ENCODE measurements at regions of chr12 and their contacts with region 1.

Region 1: DNA sequence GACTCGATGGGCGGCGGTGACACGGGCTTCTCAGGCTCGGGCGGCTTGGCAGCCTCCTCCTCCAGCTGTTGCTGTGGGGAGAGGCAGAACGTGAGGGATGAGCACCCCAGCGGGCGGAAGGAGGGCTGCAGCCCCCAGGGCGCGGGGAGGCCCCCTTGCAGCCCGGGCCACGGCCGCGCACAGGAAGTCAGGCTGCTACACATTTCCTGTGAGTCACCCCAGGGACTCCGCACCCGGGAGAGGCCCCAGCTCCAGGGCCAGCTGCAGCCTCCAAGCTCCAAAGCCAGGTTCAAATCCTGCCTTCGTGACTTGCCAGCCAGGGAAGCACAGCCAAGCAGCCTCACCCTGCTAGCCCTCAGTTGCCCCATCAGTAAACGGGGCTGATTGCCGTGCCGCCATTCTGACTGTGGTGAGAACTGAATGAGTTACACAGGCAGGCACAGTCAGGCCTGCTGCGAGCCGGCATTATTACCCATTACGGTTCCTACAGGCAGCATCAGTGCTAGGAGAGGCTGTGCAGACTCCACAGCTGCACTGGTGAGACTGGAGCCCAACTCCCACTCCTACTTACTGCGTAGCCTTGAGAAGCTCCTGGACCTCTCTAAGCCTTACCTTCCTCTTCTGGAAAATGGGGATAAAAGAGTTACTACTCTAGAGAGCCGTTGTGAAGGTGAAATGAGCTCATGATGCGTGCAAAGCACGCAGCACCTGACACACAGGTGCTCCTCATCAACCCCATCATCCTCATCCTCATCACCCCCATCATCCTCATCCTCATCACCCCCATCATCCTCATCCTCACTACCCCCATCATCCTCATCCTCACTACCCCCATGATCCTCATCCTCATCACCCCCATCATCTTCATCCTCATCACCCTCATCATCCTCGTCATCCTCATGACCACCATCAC is 100.9 kb downstream of the NCOR2 start:
- DNase-seq: peak; percentile 95
- ATAC-seq: peak; percentile 98
- H3K4me3 Mint-ChIP-seq: peak overlapping the region; percentile 48
- H3K27ac Mint-ChIP-seq: peak overlapping the region; percentile 89
- H3K4me1 Mint-ChIP-seq: peaks cover 46% of the 10 kb centered on the region
- H3K27me3 Mint-ChIP-seq: no peaks in the 10 kb centered on the region

Region 2: DNA sequence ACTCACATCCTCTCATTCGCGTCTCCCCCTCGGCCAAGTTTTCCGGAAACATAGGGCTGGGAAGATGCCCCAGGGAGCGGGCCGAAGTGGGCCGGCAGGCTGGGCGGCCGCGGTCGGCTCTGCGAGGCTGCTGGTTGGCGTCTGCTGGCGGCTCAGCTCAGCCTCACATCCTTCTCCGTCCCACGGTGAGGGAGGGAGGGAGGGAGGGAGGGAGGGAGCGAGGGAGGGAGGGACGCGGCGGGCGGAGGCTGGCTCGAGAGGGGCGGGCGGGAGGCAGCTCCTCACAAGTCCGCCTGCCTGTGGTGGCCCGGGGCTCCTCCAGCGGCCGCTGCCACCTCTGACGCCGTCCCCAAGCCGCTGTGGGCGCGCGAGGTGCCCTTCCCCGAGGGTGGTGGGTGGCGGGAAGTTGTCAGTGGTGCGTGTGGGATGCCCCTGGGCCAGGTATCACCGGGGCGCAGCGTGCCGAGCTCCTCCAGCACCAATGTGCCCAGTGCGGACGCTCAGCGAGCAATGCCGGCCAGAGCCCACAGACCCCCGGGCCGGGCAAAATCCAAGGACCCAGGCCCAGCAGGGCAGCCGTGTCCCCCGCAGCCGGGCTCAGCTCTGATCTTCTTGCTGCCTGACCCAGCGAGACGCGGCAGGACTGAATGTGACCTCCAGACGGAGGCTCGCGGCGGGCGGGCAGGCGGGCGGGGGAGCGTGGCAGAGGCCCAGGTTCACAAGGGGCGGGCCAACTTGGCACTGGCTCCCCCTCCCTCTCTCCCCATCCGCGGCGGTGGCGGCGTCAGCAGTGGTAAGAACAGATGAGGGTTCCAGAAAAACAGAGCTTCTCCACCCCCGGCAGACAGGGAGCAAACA is 77.6 kb before region 1 on chr12:
- CTCF ChIA-PET with region 1: interaction called, 10 read pairs
- DNase-seq: peak; percentile 59
- ATAC-seq: peak; percentile 70
- H3K4me3 Mint-ChIP-seq: no peak overlapping the region
- H3K27ac Mint-ChIP-seq: no peak overlapping the region
- H3K4me1 Mint-ChIP-seq: peaks cover 25% of the 10 kb centered on the region
- H3K27me3 Mint-ChIP-seq: no peaks in the 10 kb centered on the region

Region 3: GRCh38 chr12:124453419-124454351 is 12.8 kb before region 1 on chr12:
- CTCF ChIA-PET with region 1: interaction called, 49 read pairs
- DNase-seq: peak; percentile 94
- ATAC-seq: peak; percentile 85
- H3K4me3 Mint-ChIP-seq: peak overlapping the region; percentile 35
- H3K27ac Mint-ChIP-seq: peak overlapping the region; percentile 84
- H3K4me1 Mint-ChIP-seq: peaks cover 73% of the 10 kb centered on the region
- H3K27me3 Mint-ChIP-seq: peaks cover 4% of the 10 kb centered on the region